ENCODE measurements at regions of chr9 and their contacts with region 1.

Region 1: DNA sequence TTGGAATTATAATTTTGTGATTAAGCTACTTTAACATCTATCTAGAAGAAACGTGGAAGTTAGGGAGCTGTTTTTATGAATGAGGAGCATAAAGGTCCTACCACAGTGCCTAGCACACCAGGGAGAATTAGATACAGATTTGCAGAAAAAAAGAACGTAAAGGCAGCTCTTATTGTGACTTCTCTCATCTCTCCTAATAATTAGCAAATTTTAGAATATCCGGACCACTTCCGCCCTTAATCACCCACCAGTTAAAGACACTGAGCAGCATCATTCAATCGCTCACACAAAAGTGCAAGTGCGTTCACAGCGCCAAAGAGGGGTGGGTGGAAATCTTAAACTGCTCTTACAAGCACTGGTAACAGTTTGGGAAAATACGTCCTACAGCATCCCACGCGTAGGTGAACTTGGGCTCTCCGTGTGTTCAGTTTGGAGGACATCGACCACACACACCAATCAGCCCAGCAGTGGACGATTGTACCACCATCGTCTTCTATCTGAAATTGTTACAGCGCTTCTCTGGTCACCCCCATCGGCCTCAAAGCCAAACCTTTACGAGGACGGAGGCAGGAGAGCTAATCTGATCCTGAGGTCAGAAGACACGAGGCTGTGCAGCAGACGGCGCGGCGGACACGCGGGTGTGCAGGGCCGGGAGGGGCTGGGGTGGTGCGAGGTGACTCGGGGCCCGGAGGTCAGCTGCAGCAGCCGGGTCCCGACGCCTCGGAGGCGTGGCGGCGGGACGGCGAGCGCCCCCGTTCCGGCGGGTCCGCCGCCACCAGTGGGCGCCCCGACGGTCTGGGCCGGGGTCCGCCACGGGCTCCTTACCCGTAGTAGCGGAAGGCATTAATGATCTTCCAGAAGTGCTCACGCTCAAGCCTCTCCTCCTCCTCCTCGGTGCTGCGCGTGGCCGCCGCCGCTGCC is 646 bp downstream of the CARNMT1 start:
- DNase-seq: peak in 4 of 5 donors; percentile 17 to 63 (median 41)
- H3K4me3 ChIP-seq: peak overlapping the region; percentile 72 to 74
- H3K4me3 Mint-ChIP-seq: peak overlapping the region; percentile 94 to 98 (median 96)
- H3K27ac ChIP-seq: peak overlapping the region; percentile 77
- H3K27ac Mint-ChIP-seq: peak overlapping the region; percentile 89 to 99 (median 96)
- H3K4me1 ChIP-seq: peaks cover 48% of the 10 kb centered on the region
- H3K4me1 Mint-ChIP-seq: peaks cover 33 to 54% (median 43%) of the 10 kb centered on the region in 4 donors
- H3K27me3 ChIP-seq: no peaks in the 10 kb centered on the region
- H3K27me3 Mint-ChIP-seq: peaks cover 0 to 2% of the 10 kb centered on the region in 2 donors

Region 2: DNA sequence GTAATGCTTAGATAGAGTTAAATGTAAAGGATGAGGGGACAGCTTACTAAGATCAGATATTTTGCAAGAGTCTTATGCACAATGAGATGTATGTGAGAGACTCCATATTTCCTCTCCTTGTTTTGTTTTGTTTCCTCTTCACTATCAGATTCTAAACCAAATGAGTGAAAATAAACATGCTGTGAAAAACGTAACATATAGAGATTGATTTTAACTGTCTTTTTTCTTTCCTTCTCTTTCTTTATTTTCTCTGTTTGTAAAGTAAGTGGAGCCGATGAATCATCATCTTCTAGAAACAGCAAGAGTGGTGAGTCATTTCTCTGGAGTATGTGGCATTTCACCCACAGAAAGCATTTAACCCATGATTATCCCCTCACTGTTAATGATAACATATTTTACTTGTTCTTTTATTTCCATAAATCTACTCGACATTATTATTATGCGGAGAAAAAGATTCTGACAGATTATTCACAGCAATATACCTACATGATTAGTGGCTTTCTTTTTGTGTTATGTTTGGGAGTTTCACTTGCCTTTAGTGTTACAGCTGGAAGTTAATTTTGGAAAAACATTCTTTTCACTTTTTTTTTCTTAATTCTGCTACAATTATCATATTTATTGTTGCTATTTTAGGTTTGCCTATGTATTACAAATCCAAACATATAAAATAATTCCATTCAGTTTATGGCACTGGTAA is 1877.9 kb before region 1 on chr9:
- CTCF ChIA-PET with region 1: no interaction called
- POLR2A ChIA-PET with region 1: interaction called, 4 read pairs
- intact Hi-C with region 1: loop called (anchors 10 kb)
- DNase-seq: peak in 4 of 5 donors; percentile 33 to 68 (median 50)
- H3K4me3 ChIP-seq: peak overlapping the region in 1 of 2 donors; percentile 17
- H3K4me3 Mint-ChIP-seq: peak overlapping the region; percentile 37 to 83 (median 78)
- H3K27ac ChIP-seq: peak overlapping the region; percentile 75
- H3K27ac Mint-ChIP-seq: peak overlapping the region; percentile 82 to 99 (median 95)
- H3K4me1 ChIP-seq: peaks cover 41% of the 10 kb centered on the region
- H3K4me1 Mint-ChIP-seq: peaks cover 24 to 51% (median 32%) of the 10 kb centered on the region in 4 donors
- H3K27me3 ChIP-seq: no peaks in the 10 kb centered on the region
- H3K27me3 Mint-ChIP-seq: no peaks in the 10 kb centered on the region

Region 3: GRCh38 chr9:74952281-74953151 is 74.9 kb before region 1 on chr9 and contains the start of gene C9orf40:
- CTCF ChIA-PET with region 1: interaction called, 49 read pairs
- POLR2A ChIA-PET with region 1: interaction called, 54 read pairs
- intact Hi-C with region 1: loop called (anchors 1 kb)
- DNase-seq: peak; percentile 88 to 90 (median 89)
- H3K4me3 ChIP-seq: peak within 1 kb of the TSS; percentile 66 to 96
- H3K4me3 Mint-ChIP-seq: peak within 1 kb of the TSS; percentile 96 to 100 (median 98)
- H3K27ac ChIP-seq: peak within 1 kb of the TSS; percentile 82
- H3K27ac Mint-ChIP-seq: peak within 1 kb of the TSS; percentile 93 to 98 (median 97)
- H3K4me1 ChIP-seq: peaks cover 23% of the 10 kb centered on the region
- H3K4me1 Mint-ChIP-seq: peaks cover 9 to 31% (median 23%) of the 10 kb centered on the region in 4 donors
- H3K27me3 ChIP-seq: no peaks in the 10 kb centered on the region
- H3K27me3 Mint-ChIP-seq: no peaks in the 10 kb centered on the region
- total RNA-seq, gene C9orf40: 7.1 to 7.4 TPM

Region 4: GRCh38 chr9:75001719-75002422 is 25.6 kb before region 1 on chr9:
- CTCF ChIA-PET with region 1: interaction called, 10 read pairs
- POLR2A ChIA-PET with region 1: interaction called, 4 read pairs
- intact Hi-C with region 1: no loop called
- DNase-seq: peak in 4 of 5 donors; percentile 65 to 67 (median 66)
- H3K4me3 ChIP-seq: no peak overlapping the region
- H3K4me3 Mint-ChIP-seq: no peak overlapping the region
- H3K27ac ChIP-seq: no peak overlapping the region
- H3K27ac Mint-ChIP-seq: no peak overlapping the region
- H3K4me1 ChIP-seq: no peaks in the 10 kb centered on the region
- H3K4me1 Mint-ChIP-seq: peaks cover 0 to 7% (median 6%) of the 10 kb centered on the region in 4 donors
- H3K27me3 ChIP-seq: no peaks in the 10 kb centered on the region
- H3K27me3 Mint-ChIP-seq: no peaks in the 10 kb centered on the region

Region 5: DNA sequence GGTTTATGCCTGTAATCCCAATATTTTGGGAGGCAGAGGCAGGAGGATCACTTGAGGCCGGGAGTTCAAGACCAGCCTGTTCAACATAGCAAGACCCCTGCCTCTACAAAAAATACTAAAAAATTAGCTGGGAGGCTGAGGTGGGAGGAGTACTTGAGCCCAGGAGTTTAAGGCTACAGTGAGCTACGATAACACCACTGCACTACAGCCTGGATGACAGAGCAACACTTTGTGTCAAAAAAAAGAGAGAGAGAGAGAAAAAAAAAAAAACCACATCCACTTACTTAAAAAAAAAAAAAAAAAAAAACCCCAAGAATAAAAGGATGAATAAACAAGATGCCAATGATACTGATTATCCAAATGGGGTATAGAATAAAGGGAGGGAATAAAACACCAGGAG is 13.7 kb before region 1 on chr9:
- CTCF ChIA-PET with region 1: interaction called, 14 read pairs
- POLR2A ChIA-PET with region 1: interaction called, 26 read pairs
- intact Hi-C with region 1: no loop called
- DNase-seq: peak in 2 of 5 donors; percentile 9 to 10
- H3K4me3 ChIP-seq: no peak overlapping the region
- H3K4me3 Mint-ChIP-seq: peak overlapping the region in 3 of 8 donors; percentile 32 to 41 (median 36)
- H3K27ac ChIP-seq: no peak overlapping the region
- H3K27ac Mint-ChIP-seq: peak overlapping the region in 4 of 7 donors; percentile 61 to 85 (median 82)
- H3K4me1 ChIP-seq: peaks cover 29% of the 10 kb centered on the region
- H3K4me1 Mint-ChIP-seq: peaks cover 25 to 46% (median 39%) of the 10 kb centered on the region in 4 donors
- H3K27me3 ChIP-seq: no peaks in the 10 kb centered on the region
- H3K27me3 Mint-ChIP-seq: no peaks in the 10 kb centered on the region

Region 6: DNA sequence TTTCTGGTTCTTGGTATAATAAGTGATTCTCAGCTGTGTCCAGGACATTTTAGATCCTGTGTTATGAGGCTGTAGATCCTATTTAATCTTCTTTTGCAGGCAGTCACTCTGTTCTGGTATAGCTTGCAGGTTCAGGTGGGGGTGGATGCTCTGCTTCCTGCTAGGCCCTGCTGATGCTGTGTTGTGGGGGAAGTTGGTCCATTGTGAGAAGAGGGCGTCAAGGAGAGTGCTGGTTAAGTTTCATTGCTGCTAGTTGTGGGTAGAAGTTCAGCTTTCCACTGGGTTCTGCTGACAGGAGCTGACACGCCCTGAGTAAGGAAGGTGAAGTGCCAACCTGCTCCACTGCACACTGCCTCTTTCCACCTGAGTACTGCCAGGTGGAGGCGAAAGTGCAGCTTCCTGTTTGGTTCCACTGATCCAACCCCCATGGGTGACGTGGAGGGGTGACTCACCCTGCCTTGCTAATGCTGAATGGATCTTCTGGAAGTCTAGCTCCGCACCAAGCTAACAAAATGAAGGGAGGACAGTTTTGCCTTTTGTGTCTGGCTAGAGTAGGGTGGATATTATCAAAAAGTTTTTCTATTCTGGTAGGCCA is 44.2 kb after region 1 on chr9:
- CTCF ChIA-PET with region 1: interaction called, 32 read pairs
- POLR2A ChIA-PET with region 1: interaction called, 9 read pairs
- intact Hi-C with region 1: loop called (anchors 2 kb)
- DNase-seq: peak; percentile 35 to 88 (median 42)
- H3K4me3 ChIP-seq: no peak overlapping the region
- H3K4me3 Mint-ChIP-seq: peak overlapping the region in 1 of 8 donors; percentile 23
- H3K27ac ChIP-seq: no peak overlapping the region
- H3K27ac Mint-ChIP-seq: peak overlapping the region; percentile 29 to 87 (median 57)
- H3K4me1 ChIP-seq: peaks cover 13% of the 10 kb centered on the region
- H3K4me1 Mint-ChIP-seq: peaks cover 12 to 30% (median 15%) of the 10 kb centered on the region in 4 donors
- H3K27me3 ChIP-seq: no peaks in the 10 kb centered on the region
- H3K27me3 Mint-ChIP-seq: no peaks in the 10 kb centered on the region

Region 7: GRCh38 chr9:75148561-75148960 is 121.1 kb after region 1 on chr9:
- CTCF ChIA-PET with region 1: interaction called, 3 read pairs
- POLR2A ChIA-PET with region 1: interaction called, 8 read pairs
- intact Hi-C with region 1: loop called (anchors 5 kb)
- DNase-seq: no peak
- H3K4me3 ChIP-seq: peak overlapping the region in 1 of 2 donors; percentile 0
- H3K4me3 Mint-ChIP-seq: peak overlapping the region in 7 of 8 donors; percentile 30 to 88 (median 80)
- H3K27ac ChIP-seq: peak overlapping the region; percentile 37
- H3K27ac Mint-ChIP-seq: peak overlapping the region; percentile 74 to 92 (median 84)
- H3K4me1 ChIP-seq: peaks cover 86% of the 10 kb centered on the region
- H3K4me1 Mint-ChIP-seq: peaks cover 62 to 92% (median 74%) of the 10 kb centered on the region in 4 donors
- H3K27me3 ChIP-seq: no peaks in the 10 kb centered on the region
- H3K27me3 Mint-ChIP-seq: no peaks in the 10 kb centered on the region

Region 8: GRCh38 chr9:75754080-75754479 is 726.6 kb after region 1 on chr9:
- CTCF ChIA-PET with region 1: no interaction called
- POLR2A ChIA-PET with region 1: no interaction called
- intact Hi-C with region 1: no loop called
- DNase-seq: no peak
- H3K4me3 ChIP-seq: no peak overlapping the region
- H3K4me3 Mint-ChIP-seq: no peak overlapping the region
- H3K27ac ChIP-seq: no peak overlapping the region
- H3K27ac Mint-ChIP-seq: no peak overlapping the region
- H3K4me1 ChIP-seq: no peaks in the 10 kb centered on the region
- H3K4me1 Mint-ChIP-seq: no peaks in the 10 kb centered on the region
- H3K27me3 ChIP-seq: no peaks in the 10 kb centered on the region
- H3K27me3 Mint-ChIP-seq: no peaks in the 10 kb centered on the region